Aorta (tissue), 5 donors: ENCODE measurements at regions of chr2 and their contacts with region 1.

Region 1: GRCh38 chr2:181715033-181715630 is 34.8 kb upstream of the NEUROD1 start:
- DNase-seq: peak in 1 of 2 donors; percentile 54
- ATAC-seq: peak; percentile 65
- H3K4me3 ChIP-seq: no peak overlapping the region
- H3K27ac ChIP-seq: no peak overlapping the region
- H3K4me1 ChIP-seq: no peaks in the 10 kb centered on the region
- H3K27me3 ChIP-seq: no peaks in the 10 kb centered on the region

Region 2: DNA sequence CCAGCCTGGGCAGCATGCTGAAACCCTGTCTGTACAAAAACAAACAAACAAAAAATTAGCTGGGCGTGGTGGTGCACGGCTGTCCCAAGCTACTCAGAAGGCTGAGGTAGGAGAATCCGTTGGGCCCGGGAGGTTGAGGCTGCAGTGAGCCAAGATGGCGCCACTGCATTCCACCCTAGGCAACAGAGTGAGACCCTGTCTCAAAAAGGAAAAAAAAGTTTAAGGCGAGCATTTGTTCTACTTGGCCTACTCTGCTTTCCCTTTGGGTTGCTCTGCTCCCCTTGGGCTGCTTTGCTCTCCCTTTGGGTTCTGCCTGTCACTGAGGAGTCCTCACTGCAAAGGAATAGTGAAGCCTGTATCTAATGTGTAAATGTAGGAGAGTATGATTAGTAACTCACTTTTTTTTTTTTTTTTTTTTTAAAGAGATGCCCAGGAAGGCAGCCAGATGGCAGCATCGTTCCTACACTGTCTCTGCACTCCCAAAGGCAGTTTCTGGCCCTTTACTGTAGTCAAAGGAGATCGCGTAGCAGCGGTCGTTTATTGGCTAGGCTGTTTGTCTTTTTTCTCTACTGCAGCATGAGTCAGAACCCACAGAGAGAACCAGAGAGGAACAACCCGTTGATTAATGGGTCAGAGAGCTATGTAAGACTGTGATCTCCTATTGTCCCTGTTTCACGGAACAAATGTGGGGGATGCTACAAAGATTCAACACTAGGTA is 1589.7 kb before region 1 on chr2:
- intact Hi-C with region 1: loop called in 1 of 2 experiments (anchors 5 kb)
- DNase-seq: peak; percentile 57 to 73
- ATAC-seq: peak; percentile 63
- H3K4me3 ChIP-seq: no peak overlapping the region
- H3K27ac ChIP-seq: no peak overlapping the region
- H3K4me1 ChIP-seq: no peaks in the 10 kb centered on the region
- H3K27me3 ChIP-seq: no peaks in the 10 kb centered on the region

Region 3: GRCh38 chr2:181077128-181077709 is 637.9 kb before region 1 on chr2:
- intact Hi-C with region 1: loop called in 1 of 2 experiments (anchors 10 kb)
- DNase-seq: no peak
- ATAC-seq: no peak
- H3K4me3 ChIP-seq: no peak overlapping the region
- H3K27ac ChIP-seq: no peak overlapping the region
- H3K4me1 ChIP-seq: peaks cover 0 to 3% of the 10 kb centered on the region in 2 donors
- H3K27me3 ChIP-seq: no peaks in the 10 kb centered on the region

Region 4: DNA sequence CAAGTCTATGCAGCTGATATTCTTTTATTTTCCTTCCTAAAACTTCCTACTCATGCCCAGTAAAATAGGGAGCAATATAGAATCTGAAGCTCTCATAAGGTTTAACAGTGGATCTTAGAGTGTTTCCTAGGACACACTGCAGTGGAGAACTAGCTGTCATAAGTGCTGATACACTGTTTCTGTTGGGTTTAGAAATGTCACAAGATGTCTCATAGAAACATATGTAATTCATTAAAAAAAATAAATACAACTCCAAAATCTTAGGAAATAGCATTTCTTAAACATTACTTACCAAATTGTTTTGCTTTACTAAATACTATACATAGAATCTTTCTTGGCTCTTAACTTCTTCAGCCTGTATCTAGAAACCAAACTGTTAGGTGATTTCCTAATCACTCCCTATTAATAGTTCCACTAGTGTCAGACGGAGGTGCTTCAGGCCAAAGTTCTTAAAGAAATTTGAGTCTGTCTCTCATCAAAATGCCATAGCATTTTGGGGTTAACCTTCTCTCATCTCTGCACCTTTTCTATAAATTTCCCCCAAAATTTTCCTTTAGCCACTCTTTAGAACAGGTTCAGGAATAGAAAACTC is 151.9 kb before region 1 on chr2:
- intact Hi-C with region 1: no loop called
- DNase-seq: no peak
- ATAC-seq: no peak
- H3K4me3 ChIP-seq: no peak overlapping the region
- H3K27ac ChIP-seq: no peak overlapping the region
- H3K4me1 ChIP-seq: no peaks in the 10 kb centered on the region
- H3K27me3 ChIP-seq: no peaks in the 10 kb centered on the region

Region 5: GRCh38 chr2:181573140-181573736 is 141.9 kb before region 1 on chr2:
- intact Hi-C with region 1: loop called in 1 of 2 experiments (anchors 10 kb)
- DNase-seq: no peak
- ATAC-seq: no peak
- H3K4me3 ChIP-seq: no peak overlapping the region
- H3K27ac ChIP-seq: no peak overlapping the region
- H3K4me1 ChIP-seq: no peaks in the 10 kb centered on the region
- H3K27me3 ChIP-seq: no peaks in the 10 kb centered on the region